ENCODE measurements at regions of chr14 and their contacts with region 1.

Region 1: GRCh38 chr14:96501742-96502617 is at the start of gene PAPOLA:
- DNase-seq: peak; percentile 95 to 96
- H3K4me3 ChIP-seq: peak within 1 kb of the TSS; percentile 93
- H3K4me3 Mint-ChIP-seq: peak within 1 kb of the TSS; percentile 99
- H3K27ac Mint-ChIP-seq: peak within 1 kb of the TSS; percentile 99
- H3K4me1 ChIP-seq: peaks cover 8% of the 10 kb centered on the region; the same call in 1 of the 2 replicates
- H3K4me1 Mint-ChIP-seq: peaks cover 24% of the 10 kb centered on the region
- H3K27me3 ChIP-seq: no peaks in the 10 kb centered on the region
- H3K27me3 Mint-ChIP-seq: no peaks in the 10 kb centered on the region
- CTCF ChIP-seq: peak in 1 of 2 experiments; percentile 31
- total RNA-seq, gene PAPOLA: 204 and 207 TPM in 2 replicates

Region 2: DNA sequence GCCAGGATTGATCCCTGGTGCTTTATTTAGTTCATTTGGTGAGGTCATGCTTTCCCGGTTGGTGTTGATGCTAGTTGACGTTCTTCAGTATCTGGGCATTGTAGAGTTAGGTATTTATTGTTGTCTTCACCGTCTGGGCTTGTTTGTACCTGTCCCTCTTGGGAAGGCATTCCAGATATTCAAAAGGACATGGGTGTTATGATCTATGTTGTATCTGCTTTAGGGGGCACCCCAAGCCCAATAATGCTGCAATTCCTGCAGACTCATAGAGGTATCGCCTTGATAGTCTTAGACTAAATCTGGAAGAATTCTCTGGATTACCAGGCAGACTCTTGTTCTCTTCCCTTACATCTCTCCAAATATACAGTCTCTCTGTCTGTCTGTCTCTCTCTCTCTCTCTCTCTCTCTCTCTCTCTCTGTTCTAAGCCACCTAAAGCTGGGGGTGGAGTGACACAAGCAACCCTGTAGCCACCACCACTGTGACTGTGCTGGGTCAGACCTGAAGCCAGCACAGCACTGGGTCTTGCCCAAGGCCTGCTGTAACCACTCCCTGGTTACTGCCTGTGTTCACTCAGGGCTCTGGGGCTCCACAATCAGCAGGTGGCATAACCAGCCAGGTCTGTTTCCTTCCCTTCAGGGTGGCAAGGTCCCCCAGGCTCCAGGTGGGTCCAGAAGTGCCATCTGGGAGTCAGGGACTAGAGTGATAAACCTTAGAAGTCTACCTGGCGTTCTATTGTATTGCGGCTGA is 67.8 kb before region 1 on chr14:
- CTCF ChIA-PET with region 1: no interaction called
- POLR2A ChIA-PET with region 1: no interaction called
- intact Hi-C with region 1: loop called (anchors 2 kb)
- DNase-seq: peak in 1 of 2 experiments; percentile 31
- H3K4me3 ChIP-seq: no peak overlapping the region
- H3K4me3 Mint-ChIP-seq: no peak overlapping the region
- H3K27ac Mint-ChIP-seq: peak overlapping the region; percentile 8
- H3K4me1 ChIP-seq: no peaks in the 10 kb centered on the region
- H3K4me1 Mint-ChIP-seq: peaks cover 8% of the 10 kb centered on the region
- H3K27me3 ChIP-seq: no peaks in the 10 kb centered on the region
- H3K27me3 Mint-ChIP-seq: no peaks in the 10 kb centered on the region
- CTCF ChIP-seq: no peak

Region 3: GRCh38 chr14:96445844-96446710 is 55.9 kb before region 1 on chr14:
- CTCF ChIA-PET with region 1: no interaction called
- POLR2A ChIA-PET with region 1: no interaction called
- intact Hi-C with region 1: loop called (anchors 5 kb)
- DNase-seq: peak; percentile 68 to 79
- H3K4me3 ChIP-seq: peak overlapping the region; percentile 15; the same call in 1 of the 2 replicates
- H3K4me3 Mint-ChIP-seq: peak overlapping the region; percentile 70
- H3K27ac Mint-ChIP-seq: peak overlapping the region; percentile 74
- H3K4me1 ChIP-seq: peaks cover 30% of the 10 kb centered on the region
- H3K4me1 Mint-ChIP-seq: peaks cover 10% of the 10 kb centered on the region
- H3K27me3 ChIP-seq: no peaks in the 10 kb centered on the region
- H3K27me3 Mint-ChIP-seq: no peaks in the 10 kb centered on the region
- CTCF ChIP-seq: no peak

Region 4: GRCh38 chr14:96461950-96462683 is 39.9 kb before region 1 on chr14:
- CTCF ChIA-PET with region 1: interaction called, 3 read pairs
- POLR2A ChIA-PET with region 1: interaction called, 4 read pairs
- intact Hi-C with region 1: loop called (anchors 1 kb)
- DNase-seq: peak; percentile 94 to 97
- H3K4me3 ChIP-seq: 0 out of 2 replicates have a peak overlapping the region, but pooled peaks have one; percentile 8
- H3K4me3 Mint-ChIP-seq: peak overlapping the region; percentile 76
- H3K27ac Mint-ChIP-seq: peak overlapping the region; percentile 94
- H3K4me1 ChIP-seq: peaks cover 49% of the 10 kb centered on the region
- H3K4me1 Mint-ChIP-seq: peaks cover 23% of the 10 kb centered on the region
- H3K27me3 ChIP-seq: no peaks in the 10 kb centered on the region
- H3K27me3 Mint-ChIP-seq: no peaks in the 10 kb centered on the region
- CTCF ChIP-seq: no peak